PC-3 (cell line): ENCODE measurements at regions of chr1 and their contacts with region 1.

Region 1: GRCh38 chr1:172144445-172145061 is 275.9 kb upstream of the C1orf105 start:
- DNase-seq: no peak
- ATAC-seq: no peak
- H3K4me3 ChIP-seq: no peak overlapping the region
- H3K27ac ChIP-seq: no peak overlapping the region
- H3K4me1 ChIP-seq: peaks cover 36% of the 10 kb centered on the region
- H3K27me3 ChIP-seq: no peaks in the 10 kb centered on the region
- CTCF ChIP-seq: no peak

Region 2: GRCh38 chr1:172089768-172090510 is 54.6 kb before region 1 on chr1:
- CTCF ChIA-PET with region 1: no interaction called
- POLR2A ChIA-PET with region 1: no interaction called
- intact Hi-C with region 1: loop called (anchors 2 kb)
- DNase-seq: peak; percentile 94
- ATAC-seq: peak; percentile 100
- H3K4me3 ChIP-seq: peak overlapping the region; percentile 10; the same call in 1 of the 2 replicates
- H3K27ac ChIP-seq: no peak overlapping the region
- H3K4me1 ChIP-seq: no peaks in the 10 kb centered on the region
- H3K27me3 ChIP-seq: no peaks in the 10 kb centered on the region
- CTCF ChIP-seq: peak; percentile 100

Region 3: GRCh38 chr1:172254521-172255222 is 110.1 kb after region 1 on chr1:
- CTCF ChIA-PET with region 1: no interaction called
- POLR2A ChIA-PET with region 1: no interaction called
- intact Hi-C with region 1: loop called (anchors 2 kb)
- DNase-seq: peak; percentile 98
- ATAC-seq: peak; percentile 96
- H3K4me3 ChIP-seq: peak overlapping the region; percentile 0; the same call in 1 of the 2 replicates
- H3K27ac ChIP-seq: peak overlapping the region; percentile 53
- H3K4me1 ChIP-seq: peaks cover 23% of the 10 kb centered on the region
- H3K27me3 ChIP-seq: no peaks in the 10 kb centered on the region
- CTCF ChIP-seq: no peak